WTC11 (cell line): ENCODE measurements at regions of chr2 and their contacts with region 1.

Region 1: DNA sequence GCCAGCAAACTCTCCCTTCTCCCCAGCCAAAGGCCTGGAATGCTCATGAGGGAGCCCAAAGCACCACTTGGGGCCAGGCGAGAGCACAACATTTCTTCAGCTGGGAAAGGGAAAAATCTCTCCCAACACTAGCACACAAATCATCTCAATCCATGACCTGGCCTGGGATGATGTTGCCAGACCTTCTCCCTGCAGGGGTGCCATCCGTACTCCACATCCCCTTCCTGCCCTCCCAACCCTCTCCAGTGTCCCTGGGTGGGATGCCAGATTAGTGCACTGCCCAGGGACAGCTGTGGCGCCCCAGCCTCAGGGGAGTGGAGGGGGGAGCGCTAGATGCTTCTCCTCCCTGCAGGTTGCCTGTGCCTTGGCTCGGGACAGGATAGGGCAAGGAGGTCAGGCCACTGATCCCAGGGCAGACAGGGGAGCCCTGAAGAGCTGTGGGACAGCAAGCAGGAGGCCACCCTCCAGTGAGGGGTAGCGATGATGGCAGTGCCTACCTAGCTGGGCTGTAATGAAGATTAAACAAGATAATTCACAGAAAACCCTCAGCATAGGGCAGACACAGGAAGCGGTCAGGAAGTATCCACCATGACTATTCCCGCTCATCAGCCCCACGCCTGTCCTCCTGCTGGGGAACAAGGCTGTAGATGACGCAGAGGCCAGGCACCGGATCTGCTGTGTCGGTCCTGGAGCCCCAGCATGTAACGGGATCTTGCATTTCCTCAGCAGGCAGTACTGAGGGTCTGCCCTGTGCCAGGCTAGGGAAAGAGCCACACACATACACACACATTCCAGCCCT is 31.1 kb downstream of the SERTAD2 start:
- DNase-seq: peak; percentile 32
- ATAC-seq: peak; percentile 51
- H3K4me3 Mint-ChIP-seq: no peak overlapping the region
- H3K27ac Mint-ChIP-seq: peak overlapping the region; percentile 88; the same call in 1 of the 2 replicates
- H3K4me1 Mint-ChIP-seq: peaks cover 50% of the 10 kb centered on the region
- H3K27me3 Mint-ChIP-seq: peaks cover 6% of the 10 kb centered on the region
- CTCF ChIP-seq: no peak

Region 2: DNA sequence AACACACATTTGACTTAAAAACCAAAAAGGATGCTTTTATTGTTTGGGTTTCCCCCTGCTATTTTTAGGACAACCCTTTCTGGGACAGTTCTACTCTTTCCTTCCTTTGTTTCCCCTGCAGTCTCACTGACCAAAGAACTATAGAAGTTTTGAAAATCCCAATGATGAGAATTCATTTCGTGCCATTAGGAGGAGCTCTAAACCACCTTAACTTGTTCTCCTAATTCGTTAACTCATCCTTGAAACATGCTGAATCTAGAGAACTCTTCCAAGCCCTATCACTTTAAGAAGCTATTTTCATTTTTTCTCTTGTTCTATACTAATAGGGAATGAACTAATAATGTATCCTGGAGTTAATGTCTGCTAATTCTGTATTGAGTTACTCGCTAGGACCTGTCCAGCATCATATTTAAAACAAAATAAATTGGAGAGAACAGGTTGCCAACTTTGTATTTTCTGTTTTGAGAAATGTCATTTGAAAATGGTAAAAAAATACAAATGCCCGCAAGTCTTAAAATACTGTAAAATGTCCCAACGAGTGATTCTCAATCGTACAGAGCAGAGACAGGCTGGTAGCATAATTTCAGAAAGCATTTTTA is 35.7 kb before region 1 on chr2:
- CTCF ChIA-PET with region 1: interaction called, 17 read pairs
- POLR2A ChIA-PET with region 1: no interaction called
- DNase-seq: no peak
- ATAC-seq: no peak
- H3K4me3 Mint-ChIP-seq: no peak overlapping the region
- H3K27ac Mint-ChIP-seq: no peak overlapping the region
- H3K4me1 Mint-ChIP-seq: no peaks in the 10 kb centered on the region
- H3K27me3 Mint-ChIP-seq: no peaks in the 10 kb centered on the region
- CTCF ChIP-seq: 0 out of 2 replicates have a peak, but pooled peaks have one; percentile 18

Region 3: DNA sequence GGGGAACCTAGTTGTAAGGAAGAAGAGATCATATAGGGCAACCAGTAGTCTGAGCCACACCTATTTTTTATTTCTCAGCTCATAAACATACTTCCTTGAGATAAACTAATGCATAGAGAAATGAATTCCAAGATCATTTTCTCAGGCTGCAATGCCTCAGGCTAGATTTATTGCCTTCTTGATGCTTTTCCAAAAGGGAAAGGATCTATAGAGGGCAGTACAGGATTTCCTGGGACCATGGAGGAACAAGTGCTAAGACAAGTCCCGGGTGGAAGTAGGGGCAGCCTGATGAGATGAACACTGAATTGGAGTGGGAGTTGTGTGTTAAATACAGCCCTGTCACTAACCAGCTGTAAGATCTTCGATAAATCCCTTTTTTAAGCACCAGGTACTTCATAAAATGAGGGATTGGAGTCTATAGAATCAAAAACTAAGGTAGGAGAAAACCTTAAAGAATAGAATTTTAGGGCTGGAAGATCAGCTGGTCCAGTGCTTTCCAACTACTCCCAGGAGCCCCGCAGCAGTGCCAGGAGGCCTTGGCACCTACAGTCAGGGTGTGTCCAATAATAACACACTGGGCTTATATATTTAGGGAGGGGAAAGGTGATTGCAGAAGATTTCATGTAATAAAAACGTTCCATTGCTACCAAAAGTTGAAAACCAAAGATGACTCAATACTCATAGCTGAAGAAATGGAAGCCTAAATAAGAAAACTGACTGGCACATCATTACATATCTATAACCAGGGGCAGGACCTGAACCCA is 27.1 kb before region 1 on chr2:
- CTCF ChIA-PET with region 1: interaction called, 22 read pairs
- POLR2A ChIA-PET with region 1: interaction called, 3 read pairs
- DNase-seq: no peak
- ATAC-seq: peak; percentile 74
- H3K4me3 Mint-ChIP-seq: no peak overlapping the region
- H3K27ac Mint-ChIP-seq: no peak overlapping the region
- H3K4me1 Mint-ChIP-seq: no peaks in the 10 kb centered on the region
- H3K27me3 Mint-ChIP-seq: no peaks in the 10 kb centered on the region
- CTCF ChIP-seq: no peak

Region 4: GRCh38 chr2:64609227-64609941 is 13.3 kb before region 1 on chr2:
- CTCF ChIA-PET with region 1: interaction called, 50 read pairs
- POLR2A ChIA-PET with region 1: interaction called, 8 read pairs
- DNase-seq: peak; percentile 70
- ATAC-seq: peak; percentile 81
- H3K4me3 Mint-ChIP-seq: peak overlapping the region; percentile 74
- H3K27ac Mint-ChIP-seq: no peak overlapping the region
- H3K4me1 Mint-ChIP-seq: peaks cover 7% of the 10 kb centered on the region
- H3K27me3 Mint-ChIP-seq: peaks cover 32% of the 10 kb centered on the region
- CTCF ChIP-seq: no peak; the same call in 1 of the 2 replicates

Region 5: GRCh38 chr2:64767670-64768468 is 145.2 kb after region 1 on chr2:
- CTCF ChIA-PET with region 1: interaction called, 4 read pairs
- POLR2A ChIA-PET with region 1: interaction called, 12 read pairs
- DNase-seq: peak; percentile 76
- ATAC-seq: peak; percentile 89
- H3K4me3 Mint-ChIP-seq: peak overlapping the region; percentile 94
- H3K27ac Mint-ChIP-seq: no peak overlapping the region
- H3K4me1 Mint-ChIP-seq: peaks cover 23% of the 10 kb centered on the region
- H3K27me3 Mint-ChIP-seq: peaks cover 59% of the 10 kb centered on the region
- CTCF ChIP-seq: no peak